Endothelial cell of umbilical vein (primary cell): ENCODE measurements at regions of chr1 and their contacts with region 1.

Region 1: GRCh38 chr1:61388566-61388965 is 306.2 kb downstream of the NFIA start:
- DNase-seq: peak; percentile 92
- H3K4me3 ChIP-seq: no peak overlapping the region
- H3K27ac ChIP-seq: peak overlapping the region; percentile 71
- H3K4me1 ChIP-seq: peaks cover 23% of the 10 kb centered on the region
- H3K27me3 ChIP-seq: no peaks in the 10 kb centered on the region
- CTCF ChIP-seq: no peak
- POLR2A ChIP-seq: no peak

Region 2: GRCh38 chr1:61049850-61050540 is 338.6 kb before region 1 on chr1:
- CTCF ChIA-PET with region 1: interaction called, 10 read pairs
- POLR2A ChIA-PET with region 1: no interaction called
- dilution Hi-C with region 1: no loop called
- intact Hi-C with region 1: no loop called
- DNase-seq: peak; percentile 93
- H3K4me3 ChIP-seq: peak overlapping the region; percentile 62 to 95 (median 92)
- H3K27ac ChIP-seq: peak overlapping the region; percentile 84
- H3K4me1 ChIP-seq: peaks cover 16% of the 10 kb centered on the region
- H3K27me3 ChIP-seq: no peaks in the 10 kb centered on the region
- CTCF ChIP-seq: peak; percentile 89 to 96
- POLR2A ChIP-seq: peak; percentile 40

Region 3: GRCh38 chr1:61403679-61404596 is 15.4 kb after region 1 on chr1:
- CTCF ChIA-PET with region 1: interaction called, 4 read pairs
- POLR2A ChIA-PET with region 1: no interaction called
- dilution Hi-C with region 1: no loop called
- intact Hi-C with region 1: loop called (anchors 1 kb)
- DNase-seq: peak; percentile 93
- H3K4me3 ChIP-seq: peak overlapping the region in 1 of 3 experiments; percentile 0
- H3K27ac ChIP-seq: peak overlapping the region; percentile 91
- H3K4me1 ChIP-seq: peaks cover 23% of the 10 kb centered on the region
- H3K27me3 ChIP-seq: no peaks in the 10 kb centered on the region
- CTCF ChIP-seq: no peak
- POLR2A ChIP-seq: no peak